CD4-positive, alpha-beta T cell (primary cell): ENCODE measurements at regions of chr19 and their contacts with region 1.

Region 1: GRCh38 chr19:47210689-47211316 is 20.2 kb downstream of the BBC3 start:
- DNase-seq: peak; percentile 59 to 91 (median 80)
- ATAC-seq: peak; percentile 97
- H3K4me3 ChIP-seq: no peak overlapping the region
- H3K4me3 Mint-ChIP-seq: no peak overlapping the region
- H3K27ac ChIP-seq: no peak overlapping the region
- H3K27ac Mint-ChIP-seq: peak overlapping the region; percentile 4
- H3K4me1 ChIP-seq: peaks cover 10% of the 10 kb centered on the region
- H3K4me1 Mint-ChIP-seq: peaks cover 13% of the 10 kb centered on the region
- H3K27me3 ChIP-seq: no peaks in the 10 kb centered on the region
- H3K27me3 Mint-ChIP-seq: no peaks in the 10 kb centered on the region
- CTCF ChIP-seq: peak; percentile 90

Region 2: DNA sequence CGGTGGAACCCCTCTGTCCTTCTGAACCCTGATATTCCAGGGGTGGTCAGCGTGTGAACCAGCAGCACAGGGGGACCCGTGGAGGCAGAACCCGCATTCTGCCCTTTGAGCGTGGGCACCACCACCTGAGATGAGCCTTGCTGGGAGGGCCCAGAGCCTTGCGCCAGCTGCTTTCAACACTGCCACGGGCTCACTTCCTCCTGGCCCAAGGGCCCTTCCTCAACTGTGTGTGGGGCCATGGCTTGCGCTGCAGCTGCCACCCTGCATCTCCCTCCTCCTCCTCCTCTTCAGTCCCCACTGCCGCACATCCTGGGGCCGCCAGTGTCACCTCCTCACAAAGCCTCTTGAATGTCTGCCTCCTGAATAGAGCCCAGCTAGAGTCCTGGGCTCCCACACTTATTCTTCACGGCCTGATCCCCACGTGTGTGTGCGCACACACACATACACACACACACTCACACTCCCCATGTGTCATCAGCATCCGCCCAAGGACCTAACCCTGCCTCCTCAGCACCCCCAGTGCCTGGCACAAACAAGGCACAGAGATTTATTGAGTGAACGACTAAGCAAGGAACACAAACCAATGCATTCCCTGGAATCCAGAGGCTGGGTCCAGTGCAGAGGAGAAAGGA is 135.5 kb before region 1 on chr19:
- CTCF ChIA-PET with region 1: no interaction called
- POLR2A ChIA-PET with region 1: no interaction called
- intact Hi-C with region 1: loop called in 1 of 2 experiments (anchors 5 kb)
- DNase-seq: peak in 2 of 14 experiments; percentile 24 to 39
- ATAC-seq: no peak
- H3K4me3 ChIP-seq: no peak overlapping the region
- H3K4me3 Mint-ChIP-seq: no peak overlapping the region
- H3K27ac ChIP-seq: no peak overlapping the region
- H3K27ac Mint-ChIP-seq: no peak overlapping the region
- H3K4me1 ChIP-seq: peaks cover 4% of the 10 kb centered on the region
- H3K4me1 Mint-ChIP-seq: peaks cover 6% of the 10 kb centered on the region
- H3K27me3 ChIP-seq: no peaks in the 10 kb centered on the region
- H3K27me3 Mint-ChIP-seq: no peaks in the 10 kb centered on the region
- CTCF ChIP-seq: no peak

Region 3: GRCh38 chr19:47143322-47144073 is 67.3 kb before region 1 on chr19:
- CTCF ChIA-PET with region 1: interaction called, 36 read pairs
- POLR2A ChIA-PET with region 1: interaction called, 14 read pairs
- intact Hi-C with region 1: no loop called
- DNase-seq: no peak
- ATAC-seq: no peak
- H3K4me3 ChIP-seq: no peak overlapping the region
- H3K4me3 Mint-ChIP-seq: no peak overlapping the region
- H3K27ac ChIP-seq: no peak overlapping the region
- H3K27ac Mint-ChIP-seq: no peak overlapping the region
- H3K4me1 ChIP-seq: peaks cover 42% of the 10 kb centered on the region
- H3K4me1 Mint-ChIP-seq: peaks cover 56% of the 10 kb centered on the region
- H3K27me3 ChIP-seq: no peaks in the 10 kb centered on the region
- H3K27me3 Mint-ChIP-seq: no peaks in the 10 kb centered on the region
- CTCF ChIP-seq: no peak

Region 4: GRCh38 chr19:47157431-47158321 is 53.1 kb before region 1 on chr19:
- CTCF ChIA-PET with region 1: interaction called, 41 read pairs
- POLR2A ChIA-PET with region 1: interaction called, 19 read pairs
- intact Hi-C with region 1: no loop called
- DNase-seq: peak in 12 of 14 experiments; percentile 21 to 84 (median 42)
- ATAC-seq: peak; percentile 15
- H3K4me3 ChIP-seq: peak overlapping the region; percentile 31
- H3K4me3 Mint-ChIP-seq: peak overlapping the region; percentile 81
- H3K27ac ChIP-seq: peak overlapping the region; percentile 42 to 64
- H3K27ac Mint-ChIP-seq: peak overlapping the region; percentile 85
- H3K4me1 ChIP-seq: peaks cover 73% of the 10 kb centered on the region
- H3K4me1 Mint-ChIP-seq: peaks cover 71% of the 10 kb centered on the region
- H3K27me3 ChIP-seq: no peaks in the 10 kb centered on the region
- H3K27me3 Mint-ChIP-seq: no peaks in the 10 kb centered on the region
- CTCF ChIP-seq: no peak

Region 5: DNA sequence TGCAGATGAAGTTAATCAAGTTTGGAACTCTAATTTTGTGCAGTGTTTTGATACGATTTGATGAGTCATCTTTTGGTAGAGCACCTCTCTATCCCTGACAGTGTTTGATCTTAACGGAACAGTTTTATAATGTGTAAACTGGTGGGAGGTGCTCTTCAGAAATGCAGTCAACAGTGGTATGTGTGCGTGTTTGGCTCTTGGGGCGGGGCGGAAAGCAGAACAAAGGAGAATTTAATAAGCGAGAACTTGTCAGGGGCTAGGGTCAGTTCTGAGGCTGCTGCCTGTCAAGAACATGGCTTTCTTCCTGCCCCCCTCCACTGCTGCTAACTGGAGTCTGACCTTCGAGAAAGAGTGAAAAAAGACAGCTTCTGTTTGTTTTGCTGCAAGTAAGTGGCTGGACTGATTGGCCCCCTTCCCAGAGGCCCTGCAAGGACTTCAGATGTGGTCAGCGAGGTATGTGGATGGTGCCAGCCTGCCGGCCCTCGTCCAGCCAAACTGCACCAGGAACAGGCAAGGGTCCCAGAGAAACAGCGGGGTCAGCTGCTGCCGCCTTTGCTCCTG is 20.6 kb before region 1 on chr19:
- CTCF ChIA-PET with region 1: interaction called, 42 read pairs
- POLR2A ChIA-PET with region 1: interaction called, 12 read pairs
- intact Hi-C with region 1: loop called in 1 of 2 experiments (anchors 2 kb)
- DNase-seq: peak; percentile 34 to 80 (median 64)
- ATAC-seq: peak; percentile 53
- H3K4me3 ChIP-seq: no peak overlapping the region
- H3K4me3 Mint-ChIP-seq: peak overlapping the region; percentile 49
- H3K27ac ChIP-seq: peak overlapping the region; percentile 0 to 36
- H3K27ac Mint-ChIP-seq: peak overlapping the region; percentile 90
- H3K4me1 ChIP-seq: peaks cover 82% of the 10 kb centered on the region
- H3K4me1 Mint-ChIP-seq: peaks cover 58% of the 10 kb centered on the region
- H3K27me3 ChIP-seq: no peaks in the 10 kb centered on the region
- H3K27me3 Mint-ChIP-seq: no peaks in the 10 kb centered on the region
- CTCF ChIP-seq: no peak

Region 6: GRCh38 chr19:47225746-47226425 is 15.1 kb after region 1 on chr19:
- CTCF ChIA-PET with region 1: interaction called, 25 read pairs
- POLR2A ChIA-PET with region 1: interaction called, 27 read pairs
- intact Hi-C with region 1: no loop called
- DNase-seq: peak; percentile 79 to 95 (median 86)
- ATAC-seq: peak; percentile 54
- H3K4me3 ChIP-seq: peak overlapping the region; percentile 56
- H3K4me3 Mint-ChIP-seq: peak overlapping the region; percentile 72
- H3K27ac ChIP-seq: peak overlapping the region in 1 of 2 donors; percentile 85
- H3K27ac Mint-ChIP-seq: peak overlapping the region; percentile 85
- H3K4me1 ChIP-seq: peaks cover 48% of the 10 kb centered on the region
- H3K4me1 Mint-ChIP-seq: peaks cover 15% of the 10 kb centered on the region
- H3K27me3 ChIP-seq: no peaks in the 10 kb centered on the region
- H3K27me3 Mint-ChIP-seq: no peaks in the 10 kb centered on the region
- CTCF ChIP-seq: no peak